A549 (cell line): ENCODE measurements at regions of chr15 and their contacts with region 1.

Region 1: GRCh38 chr15:66774001-66774814 is 72.2 kb downstream of the SMAD6 start:
- DNase-seq: peak; percentile 89 to 98
- ATAC-seq: peak; percentile 86 to 89
- H3K4me3 ChIP-seq: no peak overlapping the region
- H3K27ac ChIP-seq: peak overlapping the region; percentile 93 to 94
- H3K4me1 ChIP-seq: peaks cover 96% of the 10 kb centered on the region
- CTCF ChIP-seq: peak; percentile 100
- EP300 ChIP-seq: no peak
- POLR2A ChIP-seq: no peak
- RAD21 ChIP-seq: peak; percentile 99 to 100

Region 2: GRCh38 chr15:66603301-66604179 is 170.7 kb before region 1 on chr15:
- CTCF ChIA-PET with region 1: interaction called, 14 read pairs
- POLR2A ChIA-PET with region 1: no interaction called
- DNase-seq: peak; percentile 61 to 86
- ATAC-seq: peak; percentile 80 to 97
- H3K4me3 ChIP-seq: no peak overlapping the region
- H3K27ac ChIP-seq: no peak overlapping the region
- H3K4me1 ChIP-seq: no peaks in the 10 kb centered on the region
- CTCF ChIP-seq: peak; percentile 95
- EP300 ChIP-seq: no peak
- POLR2A ChIP-seq: no peak
- RAD21 ChIP-seq: peak; percentile 92

Region 3: DNA sequence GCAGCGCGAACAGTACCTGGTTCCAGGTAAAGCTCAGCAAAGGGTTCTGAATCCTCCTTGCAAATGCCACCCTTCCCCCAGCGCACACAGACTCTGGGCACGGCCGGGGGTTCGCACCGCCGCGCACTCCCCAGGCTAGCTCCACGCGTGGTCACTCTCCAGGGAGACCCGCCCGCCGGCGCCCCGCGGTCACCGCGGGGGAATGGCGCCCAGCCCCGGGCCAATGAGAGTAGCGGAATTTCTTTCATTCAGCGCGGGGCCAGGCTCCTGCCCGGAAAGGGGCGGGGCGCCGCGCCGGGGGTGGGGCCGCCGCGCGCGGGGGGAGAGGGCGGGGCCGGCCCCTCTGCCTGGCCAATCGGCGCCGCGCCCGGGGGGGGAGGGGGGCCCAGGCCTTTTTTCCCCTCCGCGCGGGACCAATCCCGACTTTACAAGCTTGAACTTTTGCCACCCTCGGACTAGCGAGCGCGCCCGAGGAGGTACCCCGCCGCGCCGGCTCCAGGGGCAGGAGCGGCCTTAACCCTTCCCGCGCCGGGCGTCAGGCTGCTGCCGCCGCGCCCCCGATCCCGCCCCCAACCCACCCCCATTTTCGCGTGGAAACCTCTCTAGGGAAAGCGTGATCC is 73.3 kb before region 1 on chr15:
- CTCF ChIA-PET with region 1: interaction called, 779 read pairs
- POLR2A ChIA-PET with region 1: interaction called, 94 read pairs
- DNase-seq: peak; percentile 92 to 98
- ATAC-seq: peak; percentile 62 to 73
- H3K4me3 ChIP-seq: peak overlapping the region; percentile 90
- H3K27ac ChIP-seq: peak overlapping the region; percentile 95
- H3K4me1 ChIP-seq: peaks cover 35% of the 10 kb centered on the region
- CTCF ChIP-seq: no peak
- EP300 ChIP-seq: peak in 1 of 2 experiments; percentile 58; a peak in 1 of 5 replicates
- POLR2A ChIP-seq: peak; percentile 62
- RAD21 ChIP-seq: peak in 1 of 2 experiments; percentile 26; a peak in 2 of 5 replicates

Region 4: GRCh38 chr15:66740802-66741201 is 33.4 kb before region 1 on chr15:
- CTCF ChIA-PET with region 1: interaction called, 24 read pairs
- POLR2A ChIA-PET with region 1: interaction called, 3 read pairs
- DNase-seq: no peak
- ATAC-seq: no peak
- H3K4me3 ChIP-seq: no peak overlapping the region
- H3K27ac ChIP-seq: peak overlapping the region in 1 of 2 experiments; percentile 33; a peak in 1 of 6 replicates
- H3K4me1 ChIP-seq: peaks cover 36% of the 10 kb centered on the region
- CTCF ChIP-seq: no peak
- EP300 ChIP-seq: no peak
- POLR2A ChIP-seq: no peak
- RAD21 ChIP-seq: no peak

Region 5: GRCh38 chr15:66803182-66803729 is 29.0 kb after region 1 on chr15:
- CTCF ChIA-PET with region 1: interaction called, 18 read pairs
- POLR2A ChIA-PET with region 1: no interaction called
- DNase-seq: peak; percentile 95 to 98
- ATAC-seq: peak; percentile 97 to 99
- H3K4me3 ChIP-seq: no peak overlapping the region
- H3K27ac ChIP-seq: peak overlapping the region; percentile 83 to 93
- H3K4me1 ChIP-seq: peaks cover 58% of the 10 kb centered on the region
- CTCF ChIP-seq: no peak
- EP300 ChIP-seq: peak; percentile 13 to 65; a peak in 2 of 5 replicates
- POLR2A ChIP-seq: peak; percentile 21; the same call in 1 of the 2 replicates
- RAD21 ChIP-seq: peak in 1 of 2 experiments; percentile 33; a peak in 2 of 5 replicates

Region 6: DNA sequence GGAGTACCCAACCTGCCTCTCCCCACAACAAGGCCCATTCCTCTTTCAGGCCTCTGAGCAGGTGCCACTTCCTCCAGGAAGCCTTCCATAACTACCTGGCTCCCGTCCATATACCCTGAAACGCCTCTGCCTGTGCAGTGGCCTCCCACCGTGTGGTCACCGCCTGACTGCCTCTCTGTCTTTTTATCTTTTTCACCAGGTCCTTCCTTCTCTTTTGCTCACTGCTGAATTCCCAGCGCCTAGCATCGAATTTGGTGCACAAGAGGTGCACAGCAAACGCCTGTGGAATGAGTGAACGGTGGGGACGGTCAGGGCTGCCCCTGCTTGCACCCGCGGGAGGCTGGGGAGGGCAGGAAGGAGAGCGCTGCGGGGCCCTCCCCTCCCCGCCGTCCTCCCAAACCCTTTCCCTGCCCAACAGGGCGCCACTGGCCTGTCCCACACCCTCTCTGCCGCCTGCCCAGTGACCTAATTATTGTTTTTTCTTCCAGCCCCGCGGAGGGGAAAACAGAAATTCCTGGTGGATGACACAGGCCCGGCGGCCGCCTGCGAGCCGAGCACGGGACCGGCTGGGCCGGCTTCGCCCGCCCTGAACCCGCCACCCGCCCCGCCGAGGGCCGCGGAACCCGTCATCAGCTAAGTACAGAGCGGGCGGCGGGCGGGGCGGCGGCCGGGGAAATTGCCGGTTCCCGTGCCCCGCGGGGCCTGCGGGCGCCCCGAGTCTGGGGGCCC is 67.9 kb after region 1 on chr15:
- CTCF ChIA-PET with region 1: interaction called, 465 read pairs
- POLR2A ChIA-PET with region 1: no interaction called
- DNase-seq: peak; percentile 68 to 81
- ATAC-seq: peak; percentile 74 to 75
- H3K4me3 ChIP-seq: peak overlapping the region; percentile 62
- H3K27ac ChIP-seq: peak overlapping the region; percentile 91 to 92
- H3K4me1 ChIP-seq: peaks cover 34% of the 10 kb centered on the region
- CTCF ChIP-seq: no peak
- EP300 ChIP-seq: peak in 1 of 2 experiments; percentile 50; a peak in 1 of 5 replicates
- POLR2A ChIP-seq: peak; percentile 20; the same call in 1 of the 2 replicates
- RAD21 ChIP-seq: peak in 1 of 2 experiments; percentile 32; a peak in 1 of 5 replicates